PC-3 (cell line): ENCODE measurements at regions of chr5 and their contacts with region 1.

Region 1: DNA sequence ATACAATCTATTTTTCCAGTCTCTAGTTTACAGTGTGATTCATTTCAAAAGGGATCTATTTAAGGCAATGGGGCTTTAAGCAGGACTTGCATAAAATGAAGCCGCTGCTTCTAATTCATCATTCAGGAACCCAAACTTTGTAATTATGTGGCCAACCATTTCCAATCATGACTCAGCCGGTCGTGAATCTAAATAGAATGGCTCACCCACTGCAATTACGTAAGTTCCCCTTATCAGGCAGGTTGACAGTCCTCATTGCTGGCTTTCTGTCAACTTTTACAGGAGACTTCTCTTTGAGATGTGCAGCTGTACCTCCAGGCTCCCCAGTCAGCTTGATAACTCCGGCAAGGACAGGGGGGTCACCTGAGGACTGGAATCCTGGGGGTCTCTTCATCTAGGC is 152.8 kb upstream of the DAP start:
- DNase-seq: peak; percentile 100
- ATAC-seq: peak; percentile 85
- H3K4me3 ChIP-seq: peak overlapping the region; percentile 37
- H3K27ac ChIP-seq: peak overlapping the region; percentile 80
- H3K4me1 ChIP-seq: peaks cover 34% of the 10 kb centered on the region
- H3K27me3 ChIP-seq: no peaks in the 10 kb centered on the region
- CTCF ChIP-seq: no peak

Region 2: GRCh38 chr5:10876006-10876744 is 37.7 kb before region 1 on chr5:
- CTCF ChIA-PET with region 1: no interaction called
- POLR2A ChIA-PET with region 1: no interaction called
- intact Hi-C with region 1: loop called (anchors 5 kb)
- DNase-seq: peak; percentile 44
- ATAC-seq: peak; percentile 23; the same call in 1 of the 2 replicates
- H3K4me3 ChIP-seq: peak overlapping the region; percentile 54
- H3K27ac ChIP-seq: peak overlapping the region; percentile 63
- H3K4me1 ChIP-seq: peaks cover 30% of the 10 kb centered on the region
- H3K27me3 ChIP-seq: no peaks in the 10 kb centered on the region
- CTCF ChIP-seq: no peak

Region 3: GRCh38 chr5:10964806-10965205 is 51.0 kb after region 1 on chr5:
- CTCF ChIA-PET with region 1: no interaction called
- POLR2A ChIA-PET with region 1: no interaction called
- intact Hi-C with region 1: loop called (anchors 2 kb)
- DNase-seq: no peak
- ATAC-seq: no peak
- H3K4me3 ChIP-seq: no peak overlapping the region
- H3K27ac ChIP-seq: no peak overlapping the region
- H3K4me1 ChIP-seq: peaks cover 11% of the 10 kb centered on the region; the same call in 1 of the 2 replicates
- H3K27me3 ChIP-seq: no peaks in the 10 kb centered on the region
- CTCF ChIP-seq: no peak